ENCODE measurements at regions of chr6 and their contacts with region 1.

Region 1: DNA sequence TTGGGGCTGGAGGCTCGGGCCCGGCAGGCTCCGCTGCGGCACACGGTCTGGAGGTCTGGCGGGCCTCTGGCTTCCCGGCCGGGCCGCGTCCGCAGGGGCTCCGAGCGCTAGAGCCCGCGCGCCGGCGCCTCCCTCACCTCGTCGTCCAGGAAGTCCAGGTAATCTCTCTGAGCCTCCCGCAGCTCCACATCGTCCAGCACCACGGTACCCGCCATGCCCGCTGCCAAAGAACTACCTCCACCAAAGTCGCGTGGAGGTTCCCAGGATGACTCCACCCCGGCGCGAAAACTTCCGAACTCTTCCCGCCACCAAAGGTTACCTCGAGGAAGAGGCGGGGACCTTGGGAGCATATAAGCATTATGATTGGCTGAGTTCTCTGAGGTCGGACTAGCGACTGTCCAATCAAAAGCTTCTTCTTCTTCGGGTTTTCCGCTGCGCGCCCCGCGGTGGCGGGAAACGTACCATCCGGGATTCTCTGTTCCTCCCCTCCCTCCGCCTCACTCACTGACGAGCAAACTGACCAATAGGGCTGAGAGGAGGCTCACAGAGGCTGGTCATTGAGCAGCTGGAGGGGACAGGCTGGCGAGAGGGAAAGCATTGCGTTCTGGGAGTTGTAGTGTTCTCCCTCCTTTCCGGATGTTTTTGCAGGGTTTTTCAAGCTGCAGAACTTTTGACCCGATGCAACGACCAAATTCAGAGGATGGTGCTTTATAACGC is at the start of gene MCM3:
- DNase-seq: peak; percentile 97 to 100 (median 99)
- H3K4me3 ChIP-seq: peak within 1 kb of the TSS; percentile 21 to 92 (median 61)
- H3K27ac ChIP-seq: peak within 1 kb of the TSS in 3 of 5 donors; percentile 29 to 79 (median 43)
- H3K4me1 ChIP-seq: peaks cover 0 to 8% of the 10 kb centered on the region in 2 donors
- H3K27me3 ChIP-seq: no peaks in the 10 kb centered on the region
- CTCF ChIP-seq: peak in 1 of 6 experiments; percentile 25
- POLR2A ChIP-seq: peak in 1 of 2 donors; percentile 55
- total RNA-seq, gene MCM3: 19.4 to 65.5 (median 25.7) TPM

Region 2: DNA sequence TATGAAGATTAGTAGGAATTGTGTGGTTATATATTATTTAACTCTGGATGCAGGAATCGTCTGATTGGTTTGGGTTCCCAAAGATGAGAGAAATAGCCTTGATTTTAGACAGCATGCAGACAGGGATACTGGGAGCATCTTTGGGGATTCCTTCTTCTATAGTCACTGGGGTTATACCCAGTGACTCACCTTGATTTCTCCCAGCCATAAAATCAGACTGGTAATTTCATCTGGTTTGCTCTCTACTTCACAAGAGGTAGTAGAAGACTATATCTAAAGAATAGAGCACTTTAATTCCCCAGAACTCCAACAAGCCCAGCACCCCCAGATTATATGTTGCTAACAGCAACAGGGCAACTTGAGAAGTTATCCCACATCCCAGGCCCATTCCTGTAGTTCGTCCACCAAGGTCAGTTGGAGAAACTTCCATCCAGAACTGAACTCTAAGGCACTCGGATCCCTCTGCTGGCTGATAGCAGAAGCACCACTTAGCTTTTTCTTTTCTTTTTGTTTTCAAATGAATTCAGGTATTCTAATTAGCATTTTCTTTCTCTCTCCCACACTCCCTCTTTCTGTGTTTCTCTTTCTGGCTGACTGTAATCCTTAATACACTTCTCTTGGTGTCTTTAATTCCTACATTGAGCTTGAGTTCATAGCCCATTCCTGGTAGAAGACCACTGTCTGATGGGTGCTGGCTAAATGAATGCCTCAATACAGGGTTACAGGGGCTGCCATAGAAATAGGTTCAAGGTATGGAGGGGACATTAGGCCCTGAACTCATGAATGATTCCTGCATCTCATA is 115.1 kb after region 1 on chr6:
- intact Hi-C with region 1: loop called (anchors 5 to 10 kb)
- DNase-seq: peak; percentile 38 to 70 (median 57)
- H3K4me3 ChIP-seq: no peak overlapping the region
- H3K27ac ChIP-seq: no peak overlapping the region
- H3K4me1 ChIP-seq: no peaks in the 10 kb centered on the region
- H3K27me3 ChIP-seq: no peaks in the 10 kb centered on the region
- CTCF ChIP-seq: peak; percentile 81 to 94 (median 84)
- POLR2A ChIP-seq: no peak

Region 3: GRCh38 chr6:52664186-52664990 is 379.8 kb after region 1 on chr6:
- intact Hi-C with region 1: loop called in 1 of 2 experiments (anchors 10 kb)
- DNase-seq: peak; percentile 87 to 97 (median 94)
- H3K4me3 ChIP-seq: peak overlapping the region; percentile 10 to 72 (median 69)
- H3K27ac ChIP-seq: peak overlapping the region in 3 of 5 donors; percentile 55 to 65 (median 61)
- H3K4me1 ChIP-seq: peaks cover 0 to 12% of the 10 kb centered on the region in 2 donors
- H3K27me3 ChIP-seq: no peaks in the 10 kb centered on the region
- CTCF ChIP-seq: no peak
- POLR2A ChIP-seq: peak; percentile 88 to 90